Posterior vena cava (tissue), 2 donors: ENCODE measurements at regions of chr12 and their contacts with region 1.

Region 1: DNA sequence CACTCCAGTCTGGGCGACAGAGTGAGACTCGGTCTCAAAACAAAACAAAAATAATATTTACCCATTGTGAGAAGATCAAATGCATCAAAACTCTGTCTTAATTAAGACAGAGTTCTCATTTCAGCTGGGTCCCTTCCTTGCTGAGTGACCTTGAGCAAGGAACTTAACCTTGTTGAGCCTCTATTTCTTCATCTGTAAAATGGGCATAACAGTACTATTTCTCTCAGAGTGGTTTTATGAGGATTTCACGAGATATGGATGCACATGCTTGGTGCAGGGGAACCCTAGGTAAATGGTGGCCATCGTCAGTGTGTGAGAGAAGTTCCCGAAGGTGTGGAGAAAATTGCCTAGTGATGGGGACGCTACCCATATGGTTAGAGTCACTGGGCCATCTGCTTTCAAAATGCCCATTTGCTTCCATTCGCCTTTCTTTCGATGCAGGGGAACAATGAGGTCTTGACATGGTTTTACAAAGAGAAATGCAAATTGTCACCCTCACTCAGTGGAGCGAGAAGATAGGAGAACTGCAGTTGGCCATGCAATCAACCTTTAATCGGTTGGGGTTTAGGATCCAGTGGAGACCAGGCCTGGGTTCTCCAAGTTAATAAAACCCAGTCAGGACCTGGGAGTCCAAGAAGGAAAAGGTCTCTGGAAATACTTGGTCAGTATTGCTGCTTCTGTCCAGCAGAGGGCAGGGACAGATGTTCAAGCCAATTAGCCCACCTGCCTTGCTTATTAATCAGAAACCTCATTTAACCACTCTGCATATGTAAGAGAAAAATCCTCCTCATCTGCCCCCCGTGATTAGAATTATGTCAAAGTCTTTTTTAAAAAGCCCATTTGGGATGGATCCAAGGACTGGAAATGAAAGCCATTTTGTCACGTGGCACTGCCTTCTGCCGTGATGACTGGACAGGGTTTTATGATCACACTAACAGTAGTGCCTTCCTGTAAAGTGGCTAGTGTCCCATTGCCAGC is 37.2 kb downstream of the CFAP251 start:
- DNase-seq: no peak

Region 2: GRCh38 chr12:121911824-121912585 is 43.5 kb before region 1 on chr12:
- intact Hi-C with region 1: loop called in 1 of 2 experiments (anchors 1 kb)
- DNase-seq: no peak

Region 3: DNA sequence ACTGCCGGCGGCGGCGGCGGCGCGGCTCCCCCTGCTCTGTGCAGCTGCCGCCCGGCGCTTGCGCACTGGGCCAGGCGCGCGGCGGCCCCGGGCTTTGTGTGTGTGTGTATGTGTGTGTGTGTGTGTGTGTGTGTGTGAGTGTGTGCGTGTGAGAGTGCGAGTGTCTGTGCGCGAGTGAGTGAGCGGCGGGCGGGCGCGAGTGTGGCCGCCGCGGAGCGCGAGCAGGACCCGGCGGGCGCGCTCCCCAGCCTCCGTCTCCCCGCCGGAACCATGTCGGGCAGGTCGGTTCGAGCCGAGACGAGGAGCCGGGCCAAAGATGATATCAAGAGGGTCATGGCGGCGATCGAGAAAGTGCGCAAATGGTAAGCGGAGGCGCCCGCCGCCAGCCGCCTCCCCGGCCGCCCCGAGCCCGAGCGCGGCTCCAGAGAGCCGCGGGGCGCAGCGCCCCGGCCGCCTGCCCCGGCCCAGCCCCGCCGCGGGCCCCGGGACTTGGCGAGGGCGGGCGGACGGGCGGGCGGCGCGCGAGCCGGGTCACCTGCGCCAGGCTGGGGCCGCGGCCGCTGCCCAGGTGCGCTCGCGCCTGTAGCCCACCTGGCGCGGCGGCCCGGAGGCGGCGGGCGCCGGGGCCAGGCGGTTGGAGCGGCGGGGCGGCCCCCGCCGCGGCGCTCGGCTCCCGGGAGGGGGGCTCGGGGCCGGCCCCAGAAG is 66.4 kb after region 1 on chr12 and contains the start of gene BCL7A:
- intact Hi-C with region 1: loop called in 1 of 2 experiments (anchors 10 kb)
- DNase-seq: peak; percentile 88
- total RNA-seq, gene BCL7A: 3.3 to 7.6 TPM

Region 4: DNA sequence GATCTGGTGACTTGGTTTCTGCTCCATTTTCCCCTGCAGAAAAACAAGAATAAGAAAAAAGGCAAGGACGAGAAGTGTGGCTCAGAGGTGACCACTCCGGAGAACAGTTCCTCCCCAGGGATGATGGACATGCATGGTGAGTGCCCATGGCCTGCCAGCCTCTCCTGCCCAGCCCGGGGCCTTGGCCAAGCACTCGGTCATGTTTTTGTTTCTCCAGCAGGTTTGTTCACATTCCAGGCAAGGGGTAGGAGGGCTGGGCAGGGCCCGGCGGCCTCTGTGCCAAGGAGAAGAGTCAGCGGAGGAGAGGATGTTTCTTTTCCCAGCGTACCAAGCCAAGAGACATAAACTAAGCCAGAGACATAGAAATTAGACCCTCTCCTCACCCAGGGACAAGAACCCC is 79.7 kb after region 1 on chr12:
- intact Hi-C with region 1: no loop called
- DNase-seq: no peak

Region 5: GRCh38 chr12:122078141-122079032 is 122.8 kb after region 1 on chr12 and contains the start of gene MLXIP:
- intact Hi-C with region 1: no loop called
- DNase-seq: peak; percentile 98
- total RNA-seq, gene MLXIP: 78.3 to 81.4 TPM